ENCODE measurements at regions of chr1 and their contacts with region 1.

Region 1: GRCh38 chr1:26321315-26322041 is 3.7 kb downstream of the CD52 start:
- DNase-seq: peak; percentile 69 to 75
- ATAC-seq: peak; percentile 88 to 97
- H3K4me3 ChIP-seq: no peak overlapping the region
- H3K27ac ChIP-seq: peak overlapping the region in 1 of 2 experiments; percentile 67; a peak in 3 of 6 replicates
- H3K4me1 ChIP-seq: 0 out of 3 replicates have a peak, but pooled peaks cover 5% of the 10 kb centered on the region
- CTCF ChIP-seq: peak; percentile 63
- EP300 ChIP-seq: no peak
- POLR2A ChIP-seq: no peak
- RAD21 ChIP-seq: peak; percentile 78 to 88

Region 2: DNA sequence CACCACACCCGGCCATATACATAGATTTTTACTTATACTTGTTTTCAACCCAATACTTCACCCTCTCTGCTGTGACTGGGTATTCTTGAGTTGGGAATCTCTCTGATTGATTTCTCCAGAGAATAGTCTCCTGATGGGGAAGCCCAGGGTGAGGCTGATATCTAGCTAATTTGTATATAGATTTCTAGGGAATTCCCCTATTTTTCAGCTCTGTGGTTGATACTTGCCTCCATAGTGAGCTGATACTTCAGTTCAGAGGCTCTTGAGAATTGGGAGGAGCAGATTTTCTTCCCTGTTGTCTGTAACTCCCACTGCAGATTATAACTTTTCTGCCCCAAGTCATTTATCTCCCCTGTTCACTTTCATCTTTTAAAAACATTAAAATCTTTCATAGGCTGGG is 56.1 kb before region 1 on chr1:
- CTCF ChIA-PET with region 1: interaction called, 12 read pairs
- POLR2A ChIA-PET with region 1: no interaction called
- DNase-seq: no peak
- ATAC-seq: no peak
- H3K4me3 ChIP-seq: no peak overlapping the region
- H3K27ac ChIP-seq: no peak overlapping the region
- H3K4me1 ChIP-seq: no peaks in the 10 kb centered on the region
- CTCF ChIP-seq: no peak
- EP300 ChIP-seq: no peak
- POLR2A ChIP-seq: no peak
- RAD21 ChIP-seq: no peak

Region 3: DNA sequence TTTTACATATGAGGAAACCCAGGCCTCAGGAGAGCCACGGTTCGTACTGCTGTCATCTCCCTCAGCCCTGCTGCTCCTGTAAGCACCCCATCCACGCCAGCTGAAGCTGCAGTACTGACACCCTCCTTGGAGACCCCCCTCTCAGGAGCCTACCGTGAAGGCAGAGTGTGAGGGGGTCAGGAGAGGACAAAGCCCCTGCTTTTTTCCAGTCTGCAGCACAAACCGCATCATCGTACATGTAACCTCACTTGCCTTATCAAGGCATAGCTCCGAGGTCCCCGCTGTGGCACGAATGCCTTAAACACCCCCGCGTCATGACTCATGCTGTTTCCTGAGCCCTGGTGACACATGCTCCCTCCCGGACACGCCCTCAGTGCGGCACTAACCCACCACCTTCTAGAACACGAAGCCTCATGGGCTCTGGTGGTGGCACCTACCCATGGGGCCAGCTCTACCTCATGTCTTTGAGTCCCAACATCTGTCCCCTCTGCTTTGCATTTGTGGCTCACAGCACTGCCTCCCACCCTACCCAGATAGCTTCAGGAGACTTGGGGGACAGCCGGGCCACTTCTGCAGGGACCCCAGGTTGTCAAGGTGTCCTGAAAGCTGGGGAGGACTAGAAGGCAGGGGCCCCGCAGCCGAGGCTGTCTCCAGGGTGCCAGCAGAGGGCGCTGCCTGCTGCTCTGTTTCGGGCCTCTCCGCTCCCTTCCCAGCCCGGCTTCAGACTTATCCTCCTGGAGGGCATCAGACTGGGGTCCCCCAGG is 36.7 kb before region 1 on chr1:
- CTCF ChIA-PET with region 1: interaction called, 128 read pairs
- POLR2A ChIA-PET with region 1: no interaction called
- DNase-seq: peak; percentile 64
- ATAC-seq: peak; percentile 67 to 82
- H3K4me3 ChIP-seq: no peak overlapping the region
- H3K27ac ChIP-seq: peak overlapping the region in 1 of 2 experiments; percentile 64; a peak in 3 of 6 replicates
- H3K4me1 ChIP-seq: peaks cover 23% of the 10 kb centered on the region
- CTCF ChIP-seq: peak; percentile 63
- EP300 ChIP-seq: no peak
- POLR2A ChIP-seq: no peak
- RAD21 ChIP-seq: peak; percentile 69

Region 4: GRCh38 chr1:26306290-26307229 is 14.9 kb before region 1 on chr1 and contains the start of gene UBXN11:
- CTCF ChIA-PET with region 1: interaction called, 37 read pairs
- POLR2A ChIA-PET with region 1: no interaction called
- DNase-seq: peak; percentile 94 to 99
- ATAC-seq: peak; percentile 99 to 100
- H3K4me3 ChIP-seq: peak within 1 kb of the TSS; percentile 63
- H3K27ac ChIP-seq: peak within 1 kb of the TSS; percentile 74 to 88
- H3K4me1 ChIP-seq: peaks cover 13% of the 10 kb centered on the region
- CTCF ChIP-seq: no peak
- EP300 ChIP-seq: no peak
- POLR2A ChIP-seq: peak; percentile 45
- RAD21 ChIP-seq: no peak
- polyA plus RNA-seq, gene UBXN11: 6.8 and 7.6 TPM in 2 replicates

Region 5: GRCh38 chr1:26363549-26364448 is 42.3 kb after region 1 on chr1:
- CTCF ChIA-PET with region 1: interaction called, 20 read pairs
- POLR2A ChIA-PET with region 1: no interaction called
- DNase-seq: peak; percentile 57 to 59
- ATAC-seq: peak; percentile 73 to 90; a peak in 5 of 6 replicates
- H3K4me3 ChIP-seq: no peak overlapping the region
- H3K27ac ChIP-seq: peak overlapping the region in 1 of 2 experiments; percentile 47; a peak in 2 of 6 replicates
- H3K4me1 ChIP-seq: peaks cover 8% of the 10 kb centered on the region; the same call in 2 of the 3 replicates
- CTCF ChIP-seq: peak; percentile 81
- EP300 ChIP-seq: no peak
- POLR2A ChIP-seq: no peak
- RAD21 ChIP-seq: peak; percentile 71 to 76